ENCODE measurements at regions of chr9 and their contacts with region 1.

Region 1: GRCh38 chr9:92764988-92765936 is 629 bp upstream of the BICD2 start:
- DNase-seq: peak; percentile 93 to 97 (median 96)
- H3K4me3 ChIP-seq: peak overlapping the region; percentile 63 to 77 (median 73)
- H3K4me3 Mint-ChIP-seq: peak overlapping the region; percentile 91 to 92
- H3K27ac ChIP-seq: peak overlapping the region; percentile 93 to 94
- H3K27ac Mint-ChIP-seq: peak overlapping the region; percentile 91 to 98 (median 97)
- H3K4me1 ChIP-seq: peaks cover 61% of the 10 kb centered on the region in 2 donors
- H3K4me1 Mint-ChIP-seq: peaks cover 63% of the 10 kb centered on the region
- H3K27me3 ChIP-seq: no peaks in the 10 kb centered on the region
- H3K27me3 Mint-ChIP-seq: peaks cover 0 to 4% (median 0%) of the 10 kb centered on the region in 3 donors
- CTCF ChIP-seq: peak; percentile 99

Region 2: GRCh38 chr9:92325269-92325990 is 439.8 kb before region 1 on chr9 and contains the starts of genes CENPP and NOL8:
- intact Hi-C with region 1: loop called in 1 of 2 experiments (anchors 10 kb)
- DNase-seq: peak; percentile 85 to 87 (median 85)
- H3K4me3 ChIP-seq: peak within 1 kb of the TSS; percentile 87 to 97 (median 91)
- H3K4me3 Mint-ChIP-seq: peak within 1 kb of the TSS; percentile 100
- H3K27ac ChIP-seq: peak within 1 kb of the TSS; percentile 94 to 98
- H3K27ac Mint-ChIP-seq: peak within 1 kb of the TSS; percentile 98 to 100 (median 99)
- H3K4me1 ChIP-seq: peaks cover 23 to 29% of the 10 kb centered on the region in 2 donors
- H3K4me1 Mint-ChIP-seq: peaks cover 26% of the 10 kb centered on the region
- H3K27me3 ChIP-seq: no peaks in the 10 kb centered on the region
- H3K27me3 Mint-ChIP-seq: no peaks in the 10 kb centered on the region
- CTCF ChIP-seq: no peak
- polyA plus RNA-seq, gene CENPP: 0.50 to 1.1 (median 1.1) TPM
- polyA plus RNA-seq, gene NOL8: 2.9 to 22.0 (median 8.8) TPM

Region 3: GRCh38 chr9:92669890-92670708 is 95.2 kb before region 1 on chr9 and contains the start of gene IPPK:
- intact Hi-C with region 1: loop called (anchors 2 kb)
- DNase-seq: peak; percentile 98 to 99 (median 99)
- H3K4me3 ChIP-seq: peak within 1 kb of the TSS; percentile 69 to 97 (median 86)
- H3K4me3 Mint-ChIP-seq: peak within 1 kb of the TSS; percentile 92 to 95
- H3K27ac ChIP-seq: peak within 1 kb of the TSS; percentile 68 to 98
- H3K27ac Mint-ChIP-seq: peak within 1 kb of the TSS; percentile 92 to 97 (median 94)
- H3K4me1 ChIP-seq: peaks cover 13 to 23% of the 10 kb centered on the region in 2 donors
- H3K4me1 Mint-ChIP-seq: peaks cover 30% of the 10 kb centered on the region
- H3K27me3 ChIP-seq: no peaks in the 10 kb centered on the region
- H3K27me3 Mint-ChIP-seq: peaks cover 0 to 1% (median 0%) of the 10 kb centered on the region in 3 donors
- CTCF ChIP-seq: no peak
- polyA plus RNA-seq, gene IPPK: 1.9 to 11.6 (median 3.2) TPM

Region 4: DNA sequence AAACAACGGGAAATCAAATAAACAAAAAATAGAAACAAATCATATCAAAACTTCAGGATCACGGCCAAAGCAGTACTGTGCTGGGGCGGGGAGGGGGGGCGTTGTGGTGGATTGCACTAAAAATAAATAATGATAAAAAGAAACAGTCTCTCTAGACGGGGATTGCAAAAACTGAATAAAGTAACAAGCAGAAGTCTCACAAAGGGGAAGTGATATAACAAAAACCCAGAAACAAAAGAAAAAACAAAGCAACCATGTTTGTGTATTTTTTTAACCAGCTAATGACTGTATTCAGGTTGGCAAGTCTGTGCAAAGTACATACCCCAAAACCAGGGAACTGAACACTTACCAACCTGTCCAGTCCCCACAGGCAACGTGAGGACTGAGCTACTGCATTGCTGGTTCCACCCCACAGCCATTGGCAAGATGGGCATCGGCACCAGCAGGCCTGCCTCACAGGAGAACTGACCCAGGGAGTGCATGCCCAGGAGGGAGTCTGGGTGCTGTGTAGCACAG is 24.8 kb before region 1 on chr9:
- intact Hi-C with region 1: loop called in 1 of 2 experiments (anchors 2 kb)
- DNase-seq: peak; percentile 35 to 62 (median 54)
- H3K4me3 ChIP-seq: peak overlapping the region; percentile 43 to 74 (median 63)
- H3K4me3 Mint-ChIP-seq: peak overlapping the region; percentile 72 to 93
- H3K27ac ChIP-seq: peak overlapping the region; percentile 86 to 94
- H3K27ac Mint-ChIP-seq: peak overlapping the region; percentile 94 to 97 (median 95)
- H3K4me1 ChIP-seq: peaks cover 46 to 55% of the 10 kb centered on the region in 2 donors
- H3K4me1 Mint-ChIP-seq: peaks cover 80% of the 10 kb centered on the region
- H3K27me3 ChIP-seq: no peaks in the 10 kb centered on the region
- H3K27me3 Mint-ChIP-seq: peaks cover 0 to 1% (median 0%) of the 10 kb centered on the region in 3 donors
- CTCF ChIP-seq: no peak

Region 5: DNA sequence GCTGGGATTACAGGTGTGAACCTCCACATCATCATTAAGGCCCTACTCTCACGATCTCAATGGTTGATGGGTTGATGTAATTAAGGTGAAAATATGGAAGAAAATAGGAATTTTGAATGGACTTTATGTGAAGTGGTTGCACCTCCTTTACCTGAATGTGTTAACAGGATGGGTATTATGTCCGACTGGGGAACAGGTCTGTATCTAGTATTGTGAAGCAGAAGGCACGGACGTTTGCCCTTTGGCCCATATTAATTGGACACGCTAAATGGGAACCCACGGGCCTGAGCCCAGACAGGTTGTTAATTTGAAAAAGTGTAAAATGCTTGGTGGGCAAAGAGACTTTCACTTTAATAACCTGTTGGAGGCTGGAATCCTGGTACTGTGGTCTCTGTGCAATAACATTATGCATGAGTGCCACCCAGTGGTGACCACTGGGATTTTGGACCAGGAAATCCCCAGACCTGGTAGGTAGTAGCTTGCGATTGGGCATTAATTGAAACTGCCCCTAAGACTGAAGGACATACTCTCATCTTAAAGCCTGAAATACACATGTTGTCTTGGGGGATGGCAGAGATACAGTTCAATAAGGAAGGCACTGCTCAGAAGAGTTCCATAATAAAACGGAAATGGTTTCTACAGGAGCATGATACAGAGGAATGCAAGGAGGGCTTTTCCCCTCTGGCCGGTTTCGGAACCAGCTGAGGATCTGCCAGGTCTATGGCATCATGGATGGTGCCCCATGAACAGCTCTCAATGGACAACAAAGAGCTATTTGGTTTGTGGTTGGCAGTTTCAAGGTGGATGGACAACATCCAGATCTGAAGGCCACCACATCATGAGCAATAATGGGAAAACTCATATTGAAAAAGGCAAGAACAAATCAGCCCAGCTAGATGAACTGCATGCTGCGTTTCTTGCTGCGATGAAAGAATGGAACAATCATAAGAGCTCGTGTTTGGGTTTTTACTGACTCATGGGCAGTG is 25.6 kb after region 1 on chr9:
- intact Hi-C with region 1: loop called in 1 of 2 experiments (anchors 2 kb)
- DNase-seq: peak; percentile 75 to 85 (median 76)
- H3K4me3 ChIP-seq: no peak overlapping the region
- H3K4me3 Mint-ChIP-seq: peak overlapping the region in 1 of 2 donors; percentile 15
- H3K27ac ChIP-seq: no peak overlapping the region
- H3K27ac Mint-ChIP-seq: peak overlapping the region in 2 of 7 donors; percentile 19 to 46
- H3K4me1 ChIP-seq: peaks cover 0 to 3% of the 10 kb centered on the region in 2 donors
- H3K4me1 Mint-ChIP-seq: peaks cover 4% of the 10 kb centered on the region
- H3K27me3 ChIP-seq: peaks cover 0 to 3% of the 10 kb centered on the region in 2 donors
- H3K27me3 Mint-ChIP-seq: peaks cover 0 to 6% (median 2%) of the 10 kb centered on the region in 3 donors
- CTCF ChIP-seq: peak; percentile 89

Region 6: GRCh38 chr9:92877531-92878430 is 112.5 kb after region 1 on chr9 and contains the start of gene ZNF484:
- intact Hi-C with region 1: loop called in 1 of 2 experiments (anchors 10 kb)
- DNase-seq: peak; percentile 99 to 100 (median 100)
- H3K4me3 ChIP-seq: peak within 1 kb of the TSS; percentile 59 to 99 (median 87)
- H3K4me3 Mint-ChIP-seq: peak within 1 kb of the TSS; percentile 100
- H3K27ac ChIP-seq: peak within 1 kb of the TSS; percentile 53 to 94
- H3K27ac Mint-ChIP-seq: peak within 1 kb of the TSS; percentile 92 to 100 (median 98)
- H3K4me1 ChIP-seq: no peaks in the 10 kb centered on the region
- H3K4me1 Mint-ChIP-seq: peaks cover 20% of the 10 kb centered on the region
- H3K27me3 ChIP-seq: no peaks in the 10 kb centered on the region
- H3K27me3 Mint-ChIP-seq: peaks cover 0 to 2% (median 1%) of the 10 kb centered on the region in 3 donors
- CTCF ChIP-seq: no peak
- polyA plus RNA-seq, gene ZNF484: 1.1 to 2.7 (median 1.8) TPM

Measured in CD14-positive monocyte (primary cell).